B cell (primary cell): ENCODE measurements at regions of chr17 and their contacts with region 1.

Region 1: GRCh38 chr17:55527540-55528118 is 16.4 kb upstream of the SMIM36 start:
- DNase-seq: no peak
- ATAC-seq: no peak
- H3K4me3 ChIP-seq: no peak overlapping the region
- H3K4me3 Mint-ChIP-seq: no peak overlapping the region
- H3K27ac ChIP-seq: no peak overlapping the region
- H3K27ac Mint-ChIP-seq: no peak overlapping the region
- H3K4me1 ChIP-seq: no peaks in the 10 kb centered on the region
- H3K4me1 Mint-ChIP-seq: no peaks in the 10 kb centered on the region
- H3K27me3 ChIP-seq: no peaks in the 10 kb centered on the region
- H3K27me3 Mint-ChIP-seq: peaks cover 4% of the 10 kb centered on the region
- CTCF ChIP-seq: no peak

Region 2: DNA sequence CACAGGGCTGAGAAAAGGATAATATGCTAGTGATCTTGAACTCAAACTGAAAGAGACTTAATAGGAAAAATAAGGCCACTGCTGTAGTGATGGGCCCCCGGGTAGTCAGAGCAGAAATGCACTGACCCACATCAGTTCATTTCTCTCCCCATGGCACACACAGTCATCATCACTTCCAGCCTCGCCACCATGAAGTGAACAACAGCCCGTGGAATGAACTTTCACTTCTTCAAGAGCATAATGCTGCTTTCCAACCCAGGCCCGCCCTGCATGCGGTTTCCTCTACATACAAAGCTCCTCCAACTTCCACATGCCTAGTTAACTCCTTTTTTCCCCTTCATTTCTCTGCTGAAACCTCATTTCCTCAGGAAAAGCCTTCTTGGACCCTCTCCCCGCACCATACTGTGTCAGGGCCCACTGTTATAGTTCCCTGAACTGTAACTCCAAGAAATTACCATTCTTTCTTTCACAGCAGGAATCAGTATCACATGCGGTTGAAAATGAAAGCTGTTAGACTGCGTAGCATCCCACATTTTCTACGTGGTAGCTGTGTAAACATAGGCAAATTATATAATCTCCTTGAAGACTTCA is 49.5 kb after region 1 on chr17:
- CTCF ChIA-PET with region 1: interaction called, 12 read pairs
- POLR2A ChIA-PET with region 1: no interaction called
- intact Hi-C with region 1: no loop called
- DNase-seq: peak; percentile 66
- ATAC-seq: peak; percentile 71
- H3K4me3 ChIP-seq: peak overlapping the region in 4 of 5 experiments; percentile 15 to 71 (median 42)
- H3K4me3 Mint-ChIP-seq: no peak overlapping the region
- H3K27ac ChIP-seq: peak overlapping the region; percentile 70 to 82
- H3K27ac Mint-ChIP-seq: no peak overlapping the region
- H3K4me1 ChIP-seq: peaks cover 19 to 25% of the 10 kb centered on the region in 2 donors
- H3K4me1 Mint-ChIP-seq: peaks cover 11% of the 10 kb centered on the region
- H3K27me3 ChIP-seq: no peaks in the 10 kb centered on the region
- H3K27me3 Mint-ChIP-seq: no peaks in the 10 kb centered on the region
- CTCF ChIP-seq: no peak

Region 3: DNA sequence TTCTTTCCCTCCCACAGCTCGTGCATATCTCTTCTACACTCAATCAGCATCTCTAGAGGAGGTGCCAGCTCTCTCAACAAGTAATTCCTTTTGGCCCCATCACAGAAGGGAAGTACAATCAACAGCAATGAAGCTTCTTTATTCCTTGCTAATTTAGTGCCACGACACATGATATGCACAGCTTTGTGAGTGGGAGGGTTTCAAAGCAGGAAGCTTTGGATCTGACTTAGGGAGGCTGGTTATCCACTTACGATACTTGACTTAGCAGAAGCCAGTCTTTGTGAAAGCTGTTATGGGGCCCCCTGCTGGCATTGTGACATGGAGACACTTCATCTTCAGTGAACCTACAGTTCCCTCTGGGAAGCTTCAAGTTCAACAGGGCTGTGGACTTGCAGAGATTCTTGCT is 114.0 kb after region 1 on chr17:
- CTCF ChIA-PET with region 1: interaction called, 21 read pairs
- POLR2A ChIA-PET with region 1: no interaction called
- intact Hi-C with region 1: loop called (anchors 1 kb)
- DNase-seq: peak; percentile 34
- ATAC-seq: no peak
- H3K4me3 ChIP-seq: no peak overlapping the region
- H3K4me3 Mint-ChIP-seq: no peak overlapping the region
- H3K27ac ChIP-seq: no peak overlapping the region
- H3K27ac Mint-ChIP-seq: no peak overlapping the region
- H3K4me1 ChIP-seq: no peaks in the 10 kb centered on the region
- H3K4me1 Mint-ChIP-seq: peaks cover 4% of the 10 kb centered on the region
- H3K27me3 ChIP-seq: peaks cover 0 to 4% (median 2%) of the 10 kb centered on the region in 4 experiments
- H3K27me3 Mint-ChIP-seq: peaks cover 7% of the 10 kb centered on the region
- CTCF ChIP-seq: peak; percentile 61

Region 4: DNA sequence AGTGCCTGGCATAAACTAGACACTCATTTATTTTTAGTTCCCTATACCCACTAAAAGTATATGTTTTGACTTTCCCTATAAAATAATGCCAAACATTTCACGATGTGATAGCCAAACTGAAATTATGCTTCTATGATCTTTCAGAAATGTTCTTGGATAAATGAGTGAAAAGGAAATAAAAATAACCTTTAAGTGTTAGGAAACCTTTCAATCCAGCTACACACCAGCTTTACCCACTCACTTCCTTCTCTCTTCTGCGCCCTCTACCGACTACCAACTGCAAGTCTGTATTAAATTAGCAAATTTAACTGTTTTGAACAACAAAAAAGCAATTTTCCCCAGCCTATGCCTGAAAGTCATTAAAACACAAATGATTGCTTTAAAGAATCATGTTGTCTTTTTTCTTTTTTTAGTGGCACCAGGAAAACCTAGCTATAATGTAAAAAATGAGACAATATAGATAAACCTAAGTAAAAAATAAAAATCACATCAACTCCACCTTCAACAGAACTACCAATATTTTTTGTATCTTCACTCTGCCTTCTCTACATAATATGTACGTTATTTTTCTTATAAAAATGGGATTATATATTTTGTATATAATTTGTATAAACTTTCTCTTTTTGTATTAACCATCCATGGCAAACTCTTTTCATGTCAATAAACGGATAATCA is 208.2 kb after region 1 on chr17:
- CTCF ChIA-PET with region 1: interaction called, 16 read pairs
- POLR2A ChIA-PET with region 1: no interaction called
- intact Hi-C with region 1: loop called (anchors 1 kb)
- DNase-seq: peak; percentile 54
- ATAC-seq: peak; percentile 60
- H3K4me3 ChIP-seq: no peak overlapping the region
- H3K4me3 Mint-ChIP-seq: no peak overlapping the region
- H3K27ac ChIP-seq: no peak overlapping the region
- H3K27ac Mint-ChIP-seq: no peak overlapping the region
- H3K4me1 ChIP-seq: peaks cover 6% of the 10 kb centered on the region in 2 donors
- H3K4me1 Mint-ChIP-seq: peaks cover 7% of the 10 kb centered on the region
- H3K27me3 ChIP-seq: peaks cover 0 to 3% (median 0%) of the 10 kb centered on the region in 4 experiments
- H3K27me3 Mint-ChIP-seq: peaks cover 33% of the 10 kb centered on the region
- CTCF ChIP-seq: peak; percentile 79

Region 5: DNA sequence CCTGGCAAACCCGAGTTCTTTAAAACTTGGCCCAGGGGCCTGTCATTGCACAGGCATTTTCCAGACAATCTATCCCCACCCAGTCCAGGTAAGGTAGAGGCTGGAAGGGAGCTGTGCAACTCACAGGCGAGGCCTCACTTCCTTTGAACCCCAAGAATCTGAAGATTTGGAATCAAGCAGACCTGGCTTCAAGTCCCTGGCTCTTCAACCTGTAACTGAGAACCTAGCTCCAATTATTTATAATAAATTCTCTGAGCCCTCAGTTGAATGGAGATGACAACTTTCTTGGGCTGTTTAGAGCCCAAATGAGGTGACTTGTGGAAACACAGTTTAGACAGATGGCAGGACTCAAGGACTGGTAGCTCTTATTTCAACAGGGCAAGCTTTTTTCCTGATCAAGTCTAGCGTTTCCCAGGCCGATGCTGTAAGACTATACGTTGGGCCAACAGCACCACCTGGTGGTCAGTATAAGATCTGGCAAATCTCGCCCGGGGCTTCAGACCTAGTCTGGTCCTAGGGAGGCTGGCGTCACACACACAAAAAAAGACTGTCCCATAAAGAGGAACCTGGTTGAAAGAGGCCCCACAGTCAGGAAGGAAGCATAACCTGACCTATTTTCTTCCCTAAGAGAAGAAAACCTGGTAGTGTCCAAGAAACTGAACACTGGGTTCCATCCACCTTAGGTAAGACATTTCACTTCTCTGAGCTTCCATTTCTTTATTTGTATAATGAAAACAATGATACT is 1188.2 kb after region 1 on chr17:
- CTCF ChIA-PET with region 1: interaction called, 4 read pairs
- POLR2A ChIA-PET with region 1: no interaction called
- intact Hi-C with region 1: loop called (anchors 5 kb)
- DNase-seq: peak; percentile 77
- ATAC-seq: peak; percentile 88
- H3K4me3 ChIP-seq: no peak overlapping the region
- H3K4me3 Mint-ChIP-seq: no peak overlapping the region
- H3K27ac ChIP-seq: no peak overlapping the region
- H3K27ac Mint-ChIP-seq: no peak overlapping the region
- H3K4me1 ChIP-seq: peaks cover 3 to 5% of the 10 kb centered on the region in 2 donors
- H3K4me1 Mint-ChIP-seq: peaks cover 4% of the 10 kb centered on the region
- H3K27me3 ChIP-seq: no peaks in the 10 kb centered on the region
- H3K27me3 Mint-ChIP-seq: no peaks in the 10 kb centered on the region
- CTCF ChIP-seq: peak; percentile 86